Breast epithelium (tissue), 4 donors: ENCODE measurements at regions of chr7 and their contacts with region 1.

Region 1: DNA sequence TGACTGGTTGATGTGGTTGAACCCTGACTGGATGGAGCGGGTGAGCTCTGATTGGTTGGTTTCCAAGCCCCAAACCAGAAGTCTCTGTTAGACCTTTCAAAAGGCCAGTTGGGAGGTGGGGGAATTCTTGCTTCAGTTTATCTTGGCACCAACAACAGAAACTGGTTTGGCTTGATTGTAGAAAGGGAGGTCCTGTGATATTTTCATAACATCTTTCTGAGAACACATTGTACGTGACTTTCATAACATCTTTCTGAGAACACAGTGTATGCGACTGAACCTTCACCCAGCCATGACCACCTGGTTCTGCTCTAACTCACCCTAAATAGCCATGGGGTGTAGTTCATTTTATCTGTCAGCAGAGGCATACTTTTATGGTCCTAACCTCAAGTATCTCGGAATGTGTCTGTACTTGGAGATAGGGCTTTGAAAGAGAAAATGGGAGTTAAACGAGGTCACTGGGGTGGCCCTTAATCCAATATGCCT is 88.3 kb downstream of the GALNT17 start:
- DNase-seq: no peak
- H3K4me3 ChIP-seq: no peak overlapping the region
- H3K27ac ChIP-seq: no peak overlapping the region
- H3K4me1 ChIP-seq: no peaks in the 10 kb centered on the region
- H3K27me3 ChIP-seq: no peaks in the 10 kb centered on the region
- CTCF ChIP-seq: no peak
- POLR2A ChIP-seq: no peak

Region 2: DNA sequence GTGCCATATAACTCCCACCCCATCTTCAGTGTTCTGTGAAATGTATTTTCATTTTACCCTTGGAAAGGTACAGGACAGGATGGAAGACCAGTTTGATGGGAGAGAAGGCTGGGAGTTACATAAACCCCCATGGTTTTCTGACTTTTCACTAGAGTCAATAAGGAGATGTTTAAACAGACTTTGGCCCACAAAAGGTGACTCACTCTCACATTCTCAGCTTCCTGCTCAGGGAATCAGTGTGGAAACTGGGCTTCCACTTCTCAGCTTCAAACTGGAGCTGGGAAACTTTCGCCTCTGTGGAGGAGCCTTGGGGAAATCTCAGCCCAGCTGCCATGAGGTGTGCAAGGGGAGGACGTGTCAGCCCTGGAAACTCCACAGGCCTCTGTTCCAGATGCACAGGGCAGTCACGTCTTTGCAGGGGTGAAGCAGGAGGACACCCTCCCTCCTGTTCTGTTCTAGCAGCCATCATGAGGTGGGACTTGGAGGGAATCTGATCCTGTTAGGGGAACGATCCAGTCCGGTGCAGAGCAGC is 648.8 kb before region 1 on chr7:
- intact Hi-C with region 1: loop called (anchors 10 kb)
- DNase-seq: no peak
- H3K4me3 ChIP-seq: no peak overlapping the region
- H3K27ac ChIP-seq: no peak overlapping the region
- H3K4me1 ChIP-seq: no peaks in the 10 kb centered on the region
- H3K27me3 ChIP-seq: no peaks in the 10 kb centered on the region
- CTCF ChIP-seq: no peak
- POLR2A ChIP-seq: no peak

Region 3: DNA sequence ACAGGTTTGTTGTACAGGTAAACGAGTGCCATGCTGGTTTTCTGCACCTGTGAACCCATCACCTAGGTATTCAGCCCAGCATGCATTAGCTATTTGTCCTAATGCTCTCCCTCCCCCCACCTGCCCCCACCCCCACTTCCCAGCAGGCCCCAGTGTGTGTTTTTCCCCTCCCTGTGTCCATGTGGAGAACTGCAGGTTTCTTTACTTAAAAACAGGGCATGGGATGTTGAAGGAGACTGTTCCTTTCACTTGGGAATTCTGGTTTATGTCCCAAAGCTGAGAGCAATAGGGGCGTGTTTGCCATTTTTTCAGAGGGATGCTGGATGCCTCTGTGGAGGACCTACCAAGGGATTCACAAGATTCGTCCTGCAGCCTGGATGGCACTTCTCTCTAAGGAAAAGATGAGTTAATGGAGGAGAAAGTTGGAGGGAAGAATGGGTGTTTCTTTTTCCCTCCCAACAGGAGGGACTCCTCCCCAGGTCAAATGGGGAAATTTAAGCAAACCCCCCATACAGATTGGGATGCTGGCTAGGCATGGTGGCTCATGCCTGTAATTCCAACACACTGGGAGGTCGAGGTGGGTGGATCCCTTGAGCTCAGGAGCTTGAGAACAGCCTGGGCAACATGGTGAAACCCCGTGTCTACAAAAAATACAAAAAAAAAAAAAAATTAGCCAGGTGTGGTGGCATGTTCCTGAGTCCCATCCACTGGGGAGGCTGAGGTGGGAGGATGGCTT is 47.6 kb after region 1 on chr7:
- intact Hi-C with region 1: no loop called
- DNase-seq: no peak
- H3K4me3 ChIP-seq: no peak overlapping the region
- H3K27ac ChIP-seq: no peak overlapping the region
- H3K4me1 ChIP-seq: no peaks in the 10 kb centered on the region
- H3K27me3 ChIP-seq: no peaks in the 10 kb centered on the region
- CTCF ChIP-seq: no peak
- POLR2A ChIP-seq: no peak